H1 (cell line): ENCODE measurements at regions of chr1 and their contacts with region 1.

Region 1: DNA sequence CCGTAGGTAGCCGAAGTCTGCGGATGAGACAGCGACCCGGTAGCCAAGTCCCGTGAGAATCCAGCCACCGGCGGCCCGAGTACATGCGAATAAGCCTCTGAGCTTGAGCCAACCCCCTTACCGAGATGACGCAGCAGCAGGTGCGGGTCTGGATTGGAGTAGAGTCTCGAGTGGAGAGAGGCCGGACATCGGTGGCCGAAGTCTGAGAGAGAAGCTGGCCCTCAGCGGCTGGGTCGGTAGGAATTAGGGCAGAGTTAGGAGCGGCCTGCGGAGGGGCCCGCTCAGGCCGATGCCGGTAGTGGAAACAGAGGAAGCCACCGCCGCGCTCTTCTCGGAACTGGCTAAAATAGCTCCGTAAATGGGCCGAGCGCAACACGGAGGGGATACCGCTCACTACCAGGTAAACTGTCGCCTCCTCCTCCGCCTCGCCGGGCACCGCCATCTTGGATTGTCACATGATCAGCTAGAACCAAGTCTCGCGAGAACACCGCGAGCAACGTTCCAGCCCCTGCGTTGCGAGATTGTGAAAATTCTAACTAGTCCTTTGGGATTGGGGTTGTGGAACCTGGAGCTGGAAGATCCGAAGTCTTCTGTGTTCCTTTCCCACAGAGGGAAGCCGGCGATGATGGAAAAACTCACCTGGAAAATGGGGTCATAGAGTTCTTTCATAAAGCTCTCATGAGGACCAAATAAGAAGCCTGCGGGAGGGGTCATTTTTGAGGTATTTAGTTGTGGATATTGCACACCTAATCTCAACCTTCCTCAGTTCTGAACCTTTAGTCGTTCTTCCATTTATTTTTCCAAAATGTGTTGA is at the start of gene GPATCH3:
- DNase-seq: peak; percentile 71 to 91
- H3K4me3 ChIP-seq: peak within 1 kb of the TSS; percentile 90 to 98 (median 96)
- H3K27ac ChIP-seq: peak within 1 kb of the TSS; percentile 88
- H3K4me1 ChIP-seq: peaks cover 0 to 8% (median 3%) of the 10 kb centered on the region in 4 experiments; a peak in 3 of 7 replicates
- H3K27me3 ChIP-seq: no peaks in the 10 kb centered on the region
- CTCF ChIP-seq: no peak
- EP300 ChIP-seq: no peak
- POLR2A ChIP-seq: peak; percentile 89 to 98
- RAD21 ChIP-seq: no peak
- total RNA-seq, gene GPATCH3: 17.4 and 19.8 TPM in 2 replicates

Region 2: DNA sequence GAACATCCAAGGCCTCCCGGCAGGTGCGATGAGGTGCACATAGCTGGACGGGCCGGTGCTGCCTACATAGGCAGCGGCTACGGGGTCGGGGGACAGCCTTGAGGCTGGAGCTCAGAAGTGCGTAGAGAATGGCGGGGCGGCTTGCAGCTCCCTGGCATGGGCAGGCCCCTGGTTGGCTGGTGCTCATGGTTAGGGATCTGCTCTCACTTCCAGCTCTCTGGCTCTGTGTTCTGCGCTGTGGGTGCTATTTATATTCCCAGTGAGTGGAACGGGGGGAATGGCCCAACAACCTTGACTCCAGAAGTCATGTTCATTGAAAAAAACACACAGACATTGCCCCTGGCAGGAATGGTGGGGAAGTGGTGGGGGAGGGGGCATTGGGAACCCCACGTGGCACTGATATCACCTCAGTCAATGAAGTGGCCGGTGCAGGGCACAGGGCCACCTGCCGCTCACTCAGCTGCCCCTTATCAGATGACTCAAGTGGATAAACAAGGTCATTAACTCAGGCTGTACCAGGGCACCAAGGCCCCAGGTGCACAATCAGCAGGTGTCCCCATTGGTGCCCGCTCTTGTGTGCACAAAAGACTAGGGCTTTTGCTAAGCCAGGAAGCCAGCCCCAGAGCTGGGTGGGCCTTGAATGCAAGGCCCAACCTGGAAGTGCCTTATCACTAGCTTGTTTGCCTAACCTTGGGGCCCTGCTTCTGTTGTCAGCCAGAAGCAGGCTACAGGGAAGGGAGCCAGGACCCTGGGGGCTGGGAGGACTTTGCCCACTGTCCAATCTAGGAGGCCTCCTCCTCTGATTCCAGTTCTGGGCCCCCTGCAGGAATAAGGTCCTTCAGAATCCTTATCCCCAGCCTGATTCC is 13.8 kb after region 1 on chr1 and contains the start of gene NR0B2:
- CTCF ChIA-PET with region 1: interaction called, 5 read pairs
- POLR2A ChIA-PET with region 1: interaction called, 14 read pairs
- DNase-seq: no peak
- H3K4me3 ChIP-seq: no peak within 1 kb of the TSS
- H3K27ac ChIP-seq: no peak within 1 kb of the TSS
- H3K4me1 ChIP-seq: no peaks in the 10 kb centered on the region
- H3K27me3 ChIP-seq: peaks cover 0 to 2% (median 0%) of the 10 kb centered on the region in 4 experiments; a peak in 2 of 7 replicates
- CTCF ChIP-seq: no peak
- EP300 ChIP-seq: no peak
- POLR2A ChIP-seq: no peak
- RAD21 ChIP-seq: no peak
- total RNA-seq, gene NR0B2: not detected in 2 replicates

Region 3: DNA sequence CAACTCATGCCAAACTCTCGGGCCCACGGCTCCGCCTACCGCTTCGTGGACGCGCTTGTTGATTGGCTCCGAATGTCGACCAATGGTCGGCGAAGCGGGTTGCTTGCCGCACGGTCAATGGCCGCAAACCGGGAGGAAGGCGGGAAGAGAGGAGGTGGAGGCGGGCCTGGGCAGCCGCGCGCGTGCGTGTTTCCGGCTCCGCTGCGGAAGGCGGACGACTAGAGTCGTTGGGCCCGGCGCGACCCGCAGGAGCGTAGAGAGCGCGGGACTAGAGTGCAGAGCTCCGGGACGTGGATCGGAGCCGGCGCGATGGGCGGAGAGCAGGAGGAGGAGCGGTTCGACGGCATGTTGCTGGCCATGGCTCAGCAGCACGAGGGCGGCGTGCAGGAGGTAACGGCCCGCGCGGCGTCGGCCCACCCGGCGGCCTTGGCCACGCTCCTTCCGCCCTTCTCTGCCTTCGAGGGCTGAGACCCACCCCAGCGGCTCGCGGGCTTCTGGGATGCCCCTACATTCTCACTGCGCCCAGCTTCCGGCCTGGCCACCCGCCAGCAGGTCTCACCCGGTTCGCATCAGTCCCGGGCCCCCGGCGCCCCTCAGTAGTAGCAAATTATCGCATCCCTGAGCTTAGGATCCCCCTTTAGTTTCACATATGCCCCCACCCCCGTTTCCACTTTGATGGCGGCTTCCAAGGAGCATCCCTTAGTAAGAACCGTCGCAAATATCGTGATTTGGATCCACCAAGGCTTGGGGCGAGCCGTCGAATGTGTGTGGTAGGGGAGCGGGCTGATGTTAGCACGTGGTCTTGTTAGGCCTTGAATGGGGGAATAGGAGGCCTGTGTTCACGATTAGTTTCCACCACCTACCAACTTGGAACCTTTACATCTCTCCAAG is 21.6 kb after region 1 on chr1 and contains the start of gene NUDC:
- CTCF ChIA-PET with region 1: interaction called, 5 read pairs
- POLR2A ChIA-PET with region 1: interaction called, 13 read pairs
- DNase-seq: peak; percentile 88 to 92
- H3K4me3 ChIP-seq: peak within 1 kb of the TSS; percentile 70 to 88 (median 82)
- H3K27ac ChIP-seq: peak within 1 kb of the TSS; percentile 90
- H3K4me1 ChIP-seq: peaks cover 0 to 6% (median 4%) of the 10 kb centered on the region in 4 experiments; a peak in 3 of 7 replicates
- H3K27me3 ChIP-seq: no peaks in the 10 kb centered on the region
- CTCF ChIP-seq: no peak
- EP300 ChIP-seq: no peak
- POLR2A ChIP-seq: peak; percentile 66 to 94
- RAD21 ChIP-seq: no peak
- total RNA-seq, gene NUDC: 131 and 134 TPM in 2 replicates

Region 4: GRCh38 chr1:27018316-27018715 is 118.1 kb after region 1 on chr1:
- CTCF ChIA-PET with region 1: no interaction called
- POLR2A ChIA-PET with region 1: no interaction called
- DNase-seq: no peak
- H3K4me3 ChIP-seq: no peak overlapping the region
- H3K27ac ChIP-seq: no peak overlapping the region
- H3K4me1 ChIP-seq: peaks cover 0 to 6% (median 4%) of the 10 kb centered on the region in 4 experiments
- H3K27me3 ChIP-seq: no peaks in the 10 kb centered on the region; a peak in 1 of 7 replicates
- CTCF ChIP-seq: no peak
- EP300 ChIP-seq: no peak
- POLR2A ChIP-seq: no peak
- RAD21 ChIP-seq: no peak

Region 5: DNA sequence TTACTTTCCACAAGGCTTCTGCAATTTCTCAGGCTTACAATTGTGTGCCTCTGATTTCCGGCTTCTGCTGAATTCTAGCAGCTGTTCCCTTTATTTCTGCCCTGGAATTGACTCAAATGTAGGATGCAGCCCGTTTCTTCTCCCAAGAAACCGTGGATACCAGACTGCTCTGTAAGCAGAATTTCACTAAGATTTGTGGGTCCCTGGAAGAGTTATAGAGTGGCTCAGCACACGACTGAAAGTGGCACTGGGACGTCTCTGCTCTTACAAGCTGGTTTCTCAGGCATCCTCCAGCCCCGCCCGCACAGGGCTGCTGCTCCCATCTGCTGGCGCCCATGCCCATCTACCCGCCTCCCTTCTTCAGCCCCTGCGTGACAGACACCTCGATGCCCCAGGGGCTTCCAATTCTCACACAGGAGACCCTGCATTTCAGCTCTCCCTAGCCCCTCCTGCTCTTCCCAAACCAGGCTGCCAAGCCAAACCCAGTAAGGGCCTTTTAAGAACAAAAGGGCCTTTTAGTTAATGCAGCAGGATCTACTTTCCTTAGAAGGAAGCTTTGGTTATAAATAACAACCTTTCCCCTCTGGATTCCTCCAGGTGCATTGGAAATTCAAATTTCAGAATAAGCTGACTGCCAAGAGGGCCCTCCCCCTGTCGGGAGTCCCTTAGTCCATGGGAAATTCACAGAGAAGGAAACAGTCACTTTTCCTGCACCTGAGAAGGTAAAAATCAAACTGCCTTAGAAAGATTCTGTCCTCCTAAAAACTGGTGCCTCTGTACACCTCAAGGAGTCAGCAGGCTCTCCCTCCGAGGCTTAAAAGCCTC is 157.8 kb after region 1 on chr1:
- CTCF ChIA-PET with region 1: no interaction called
- POLR2A ChIA-PET with region 1: no interaction called
- DNase-seq: peak in 1 of 2 experiments; percentile 65
- H3K4me3 ChIP-seq: peak overlapping the region in 2 of 4 experiments; percentile 11 to 31; a peak in 4 of 8 replicates
- H3K27ac ChIP-seq: peak overlapping the region; percentile 26; the same call in 1 of the 2 replicates
- H3K4me1 ChIP-seq: peaks cover 3 to 26% (median 19%) of the 10 kb centered on the region in 4 experiments
- H3K27me3 ChIP-seq: no peaks in the 10 kb centered on the region
- CTCF ChIP-seq: no peak
- EP300 ChIP-seq: no peak
- POLR2A ChIP-seq: 0 out of 3 replicates have a peak, but pooled peaks of 1 of the 2 experiments have one; percentile 27
- RAD21 ChIP-seq: no peak